Adrenal gland (tissue), 19 donors: ENCODE measurements at regions of chr18 and their contacts with region 1.

Region 1: DNA sequence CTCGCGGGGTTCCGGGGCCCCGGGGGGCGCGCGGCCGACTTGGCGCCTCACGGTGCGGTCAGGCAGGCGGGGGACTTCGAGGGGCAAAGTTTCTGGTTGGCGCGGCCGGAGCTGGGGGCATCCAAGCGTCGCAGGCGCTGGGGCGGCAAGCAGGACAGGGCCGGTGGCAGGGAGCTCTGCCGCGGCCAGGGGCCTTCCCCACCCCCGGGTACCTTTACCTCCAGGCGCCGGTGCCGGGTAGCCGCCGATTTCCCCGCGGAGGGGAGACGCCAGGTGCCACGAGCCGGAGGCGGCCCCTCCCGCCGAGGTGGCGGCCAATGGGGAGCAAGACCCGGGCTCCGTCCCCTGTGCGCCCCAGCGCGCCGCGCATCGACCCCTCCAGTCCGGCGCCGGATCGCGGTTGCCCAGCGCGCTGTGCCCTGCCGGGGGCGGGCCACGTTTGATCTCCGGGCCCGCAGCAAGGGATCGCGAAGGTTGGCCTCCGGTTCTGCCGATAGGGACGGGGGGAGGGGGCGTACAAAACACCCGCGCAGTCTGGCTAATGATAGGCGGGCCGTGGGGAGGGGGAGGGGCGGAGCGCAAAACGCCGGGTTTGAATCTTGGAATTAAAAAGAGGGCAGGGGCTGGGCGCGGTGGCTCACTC is at the start of gene ST8SIA5:
- DNase-seq: peak; percentile 57 to 78 (median 69)
- H3K4me3 ChIP-seq: peak within 1 kb of the TSS in 3 of 4 donors; percentile 22 to 71 (median 48)
- H3K27ac ChIP-seq: peak within 1 kb of the TSS; percentile 73 to 89 (median 89)
- H3K4me1 ChIP-seq: peaks cover 5 to 33% of the 10 kb centered on the region in 2 donors
- H3K27me3 ChIP-seq: no peaks in the 10 kb centered on the region
- CTCF ChIP-seq: peak in 1 of 6 experiments; percentile 2
- POLR2A ChIP-seq: peak in 1 of 2 donors; percentile 44
- total RNA-seq, gene ST8SIA5: 8.9 to 77.5 (median 20.0) TPM

Region 2: GRCh38 chr18:46366751-46367376 is 389.8 kb before region 1 on chr18:
- intact Hi-C with region 1: no loop called
- DNase-seq: no peak
- H3K4me3 ChIP-seq: no peak overlapping the region
- H3K27ac ChIP-seq: no peak overlapping the region
- H3K4me1 ChIP-seq: no peaks in the 10 kb centered on the region
- H3K27me3 ChIP-seq: no peaks in the 10 kb centered on the region
- CTCF ChIP-seq: no peak
- POLR2A ChIP-seq: no peak

Region 3: DNA sequence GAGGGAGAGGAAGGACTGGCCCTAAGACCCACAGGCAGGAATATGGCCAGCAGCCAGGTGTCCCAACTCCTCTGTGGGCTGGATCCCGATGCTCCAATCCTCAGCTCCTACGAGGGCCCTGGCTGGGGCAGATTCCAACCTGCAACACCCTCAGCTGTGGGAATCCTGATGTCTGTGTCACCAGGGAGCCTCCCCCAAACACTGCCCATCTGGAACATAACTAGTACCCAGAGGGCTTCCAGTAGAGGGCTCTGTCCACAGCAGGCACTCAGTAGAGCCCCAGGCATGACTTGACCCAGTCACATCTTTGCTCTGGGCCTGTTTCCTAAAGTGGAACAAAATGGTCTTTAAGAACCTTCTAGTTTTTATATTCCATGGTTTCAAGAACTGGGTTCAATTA is 79.1 kb before region 1 on chr18:
- intact Hi-C with region 1: loop called in 1 of 2 experiments (anchors 10 kb)
- DNase-seq: peak in 6 of 7 donors; percentile 16 to 58 (median 32)
- H3K4me3 ChIP-seq: no peak overlapping the region
- H3K27ac ChIP-seq: peak overlapping the region in 1 of 5 donors; percentile 88
- H3K4me1 ChIP-seq: peaks cover 5 to 20% of the 10 kb centered on the region in 2 donors
- H3K27me3 ChIP-seq: no peaks in the 10 kb centered on the region
- CTCF ChIP-seq: peak in 2 of 6 experiments; percentile 14 to 15
- POLR2A ChIP-seq: no peak

Region 4: DNA sequence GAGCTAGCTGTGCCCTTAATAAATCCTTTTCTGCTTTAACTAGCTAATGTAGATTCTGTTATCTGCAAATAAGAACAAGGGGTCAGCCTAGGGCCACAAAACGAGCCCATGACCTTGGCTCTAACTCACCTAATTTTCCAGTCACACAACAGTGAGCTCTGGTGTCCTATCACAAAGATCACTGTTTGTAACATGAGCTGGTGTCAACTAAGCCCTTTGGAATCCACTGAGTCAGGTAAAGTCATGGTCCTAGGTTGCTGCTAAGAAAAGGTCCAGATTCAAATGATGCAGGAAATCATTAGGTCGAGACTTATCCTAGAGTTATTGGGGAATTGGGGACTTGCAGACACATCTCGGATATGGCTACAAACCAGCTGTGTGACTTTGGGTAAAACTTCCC is 49.7 kb before region 1 on chr18:
- intact Hi-C with region 1: loop called in 1 of 2 experiments (anchors 10 kb)
- DNase-seq: peak in 5 of 7 donors; percentile 43 to 64 (median 53)
- H3K4me3 ChIP-seq: no peak overlapping the region
- H3K27ac ChIP-seq: peak overlapping the region in 2 of 5 donors; percentile 43 to 45
- H3K4me1 ChIP-seq: peaks cover 23 to 46% of the 10 kb centered on the region in 2 donors
- H3K27me3 ChIP-seq: no peaks in the 10 kb centered on the region
- CTCF ChIP-seq: no peak
- POLR2A ChIP-seq: no peak

Region 5: GRCh38 chr18:46821856-46822711 is 65.4 kb after region 1 on chr18:
- intact Hi-C with region 1: no loop called
- DNase-seq: no peak
- H3K4me3 ChIP-seq: no peak overlapping the region
- H3K27ac ChIP-seq: no peak overlapping the region
- H3K4me1 ChIP-seq: no peaks in the 10 kb centered on the region
- H3K27me3 ChIP-seq: no peaks in the 10 kb centered on the region
- CTCF ChIP-seq: no peak
- POLR2A ChIP-seq: no peak

Region 6: DNA sequence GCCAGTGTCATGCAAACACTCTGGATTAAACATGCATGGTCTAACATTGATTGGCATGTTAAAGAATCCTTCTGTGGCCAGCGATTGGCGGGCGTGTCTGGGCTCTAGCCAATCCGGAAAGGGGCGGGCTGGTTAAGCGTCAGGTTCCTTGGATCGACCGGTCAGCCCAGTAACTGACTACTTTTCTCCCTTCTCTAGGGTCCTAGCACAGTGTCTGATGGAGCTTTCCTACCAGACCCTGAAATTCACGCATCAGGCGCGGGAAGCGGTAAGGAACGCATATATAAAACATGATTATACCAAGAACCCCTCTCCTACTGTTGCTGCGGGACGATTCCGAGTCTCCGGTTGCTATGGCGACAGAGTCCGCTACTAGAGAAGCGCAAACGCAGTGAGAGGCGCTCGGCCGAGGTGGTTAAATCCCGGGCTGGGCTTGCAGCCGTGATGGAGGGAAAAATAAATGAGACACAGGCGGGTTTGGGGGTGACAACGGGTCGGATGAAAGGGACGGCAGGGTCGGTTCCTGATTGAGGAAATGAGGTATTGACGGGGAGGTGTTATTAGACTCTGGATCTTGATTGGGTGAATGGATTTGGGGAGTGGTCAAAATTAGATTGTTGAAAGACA is 190.1 kb after region 1 on chr18:
- intact Hi-C with region 1: no loop called
- DNase-seq: peak; percentile 80 to 95 (median 86)
- H3K4me3 ChIP-seq: peak overlapping the region; percentile 21 to 67 (median 53)
- H3K27ac ChIP-seq: no peak overlapping the region
- H3K4me1 ChIP-seq: no peaks in the 10 kb centered on the region
- H3K27me3 ChIP-seq: no peaks in the 10 kb centered on the region
- CTCF ChIP-seq: no peak
- POLR2A ChIP-seq: no peak